T-cell (primary cell): ENCODE measurements at regions of chr5 and their contacts with region 1.

Region 1: DNA sequence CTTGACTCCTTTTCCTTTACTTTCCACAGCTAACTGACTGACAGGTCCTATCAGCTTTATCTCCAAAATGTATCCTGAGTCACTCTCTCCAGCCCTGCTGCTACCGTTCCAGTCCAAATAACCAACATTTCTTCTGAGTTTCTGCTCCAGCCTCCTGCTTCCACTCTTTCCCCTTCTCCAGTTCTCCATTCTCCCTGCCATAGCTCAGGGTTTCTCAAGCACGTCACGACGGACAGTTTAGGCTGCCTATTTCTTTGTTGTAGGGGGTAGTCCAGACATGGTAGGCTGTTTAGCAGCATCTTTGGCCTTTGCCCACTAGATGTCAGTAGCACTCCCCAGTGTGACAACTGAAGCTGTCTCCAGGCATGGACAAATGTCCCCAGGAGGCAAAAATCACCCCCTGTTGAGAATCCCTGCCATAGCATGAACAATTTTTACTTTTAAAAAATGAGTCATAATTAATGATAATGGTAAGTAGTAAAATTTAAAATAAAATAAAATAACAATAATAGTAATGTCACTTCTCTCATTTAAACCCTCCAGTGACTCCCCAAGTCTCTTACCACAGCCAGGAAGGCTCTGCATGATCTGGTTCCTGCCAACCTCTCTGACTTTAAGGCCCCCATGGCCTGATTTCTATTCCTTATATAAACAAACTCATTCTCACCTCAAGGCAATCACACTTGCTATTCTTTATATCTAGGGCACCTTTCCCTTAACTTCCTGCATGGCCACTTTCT is 105.4 kb upstream of the FER start:
- DNase-seq: peak in 33 of 35 experiments; percentile 8 to 68 (median 31)
- ATAC-seq: peak; percentile 53 to 70 (median 67)
- H3K4me3 ChIP-seq: no peak overlapping the region
- H3K4me3 Mint-ChIP-seq: no peak overlapping the region
- H3K27ac ChIP-seq: no peak overlapping the region
- H3K27ac Mint-ChIP-seq: no peak overlapping the region
- H3K4me1 ChIP-seq: no peaks in the 10 kb centered on the region
- H3K4me1 Mint-ChIP-seq: peaks cover 2 to 6% (median 4%) of the 10 kb centered on the region in 3 donors
- H3K27me3 ChIP-seq: peaks cover 0 to 1% of the 10 kb centered on the region in 2 experiments
- H3K27me3 Mint-ChIP-seq: peaks cover 0 to 15% of the 10 kb centered on the region in 2 donors

Region 2: DNA sequence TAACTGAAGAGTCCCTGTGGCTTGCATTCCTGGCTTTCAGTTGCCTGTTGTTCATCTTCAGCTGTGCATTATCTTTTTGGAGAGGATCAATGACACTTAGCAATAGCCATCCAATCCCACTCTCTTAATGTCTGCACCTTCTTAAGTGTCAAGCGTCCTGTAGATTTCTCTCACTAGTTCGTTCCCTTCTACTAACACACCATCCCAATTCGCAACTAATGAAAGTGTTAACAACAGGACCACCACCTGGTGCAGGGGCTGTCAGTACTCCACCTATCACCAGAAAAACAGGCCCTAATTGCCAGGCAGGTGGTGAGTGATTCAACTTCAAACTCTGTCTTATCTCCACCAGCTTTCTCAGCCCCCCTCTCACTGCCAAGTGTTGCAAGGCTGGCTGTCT is 802.2 kb before region 1 on chr5:
- CTCF ChIA-PET with region 1: no interaction called
- POLR2A ChIA-PET with region 1: no interaction called
- DNase-seq: no peak
- ATAC-seq: no peak
- H3K4me3 ChIP-seq: no peak overlapping the region
- H3K4me3 Mint-ChIP-seq: no peak overlapping the region
- H3K27ac ChIP-seq: no peak overlapping the region
- H3K27ac Mint-ChIP-seq: no peak overlapping the region
- H3K4me1 ChIP-seq: no peaks in the 10 kb centered on the region
- H3K4me1 Mint-ChIP-seq: no peaks in the 10 kb centered on the region
- H3K27me3 ChIP-seq: peaks cover 0 to 9% of the 10 kb centered on the region in 2 experiments
- H3K27me3 Mint-ChIP-seq: peaks cover 13 to 19% of the 10 kb centered on the region in 2 donors

Region 3: DNA sequence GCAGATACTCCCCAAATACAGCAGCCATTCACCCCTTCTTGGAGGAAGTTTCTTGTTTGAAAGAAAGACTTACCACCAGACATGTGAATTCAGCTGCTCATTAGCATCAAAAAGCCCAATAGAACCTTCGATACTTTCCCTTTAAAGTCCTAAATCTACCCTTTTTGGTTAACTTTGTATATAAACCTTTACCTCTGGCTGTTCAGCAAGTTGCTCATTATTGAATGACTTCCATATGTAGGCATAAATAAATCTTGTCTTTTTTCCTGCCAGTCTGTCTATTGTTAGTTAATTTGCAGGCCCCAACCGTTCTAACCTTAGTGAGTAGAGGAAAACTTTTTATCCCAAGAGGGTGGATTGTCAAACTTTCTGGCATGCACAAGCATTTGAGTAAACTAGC is 232.6 kb before region 1 on chr5:
- CTCF ChIA-PET with region 1: interaction called in 1 of 2 experiments, 11 read pairs
- POLR2A ChIA-PET with region 1: no interaction called
- DNase-seq: no peak
- ATAC-seq: no peak
- H3K4me3 ChIP-seq: no peak overlapping the region
- H3K4me3 Mint-ChIP-seq: no peak overlapping the region
- H3K27ac ChIP-seq: no peak overlapping the region
- H3K27ac Mint-ChIP-seq: no peak overlapping the region
- H3K4me1 ChIP-seq: no peaks in the 10 kb centered on the region
- H3K4me1 Mint-ChIP-seq: no peaks in the 10 kb centered on the region
- H3K27me3 ChIP-seq: no peaks in the 10 kb centered on the region
- H3K27me3 Mint-ChIP-seq: peaks cover 0 to 1% of the 10 kb centered on the region in 2 donors

Region 4: GRCh38 chr5:108560581-108560980 is 81.8 kb before region 1 on chr5:
- CTCF ChIA-PET with region 1: no interaction called
- POLR2A ChIA-PET with region 1: no interaction called
- DNase-seq: no peak
- ATAC-seq: no peak
- H3K4me3 ChIP-seq: no peak overlapping the region
- H3K4me3 Mint-ChIP-seq: no peak overlapping the region
- H3K27ac ChIP-seq: no peak overlapping the region
- H3K27ac Mint-ChIP-seq: no peak overlapping the region
- H3K4me1 ChIP-seq: no peaks in the 10 kb centered on the region
- H3K4me1 Mint-ChIP-seq: no peaks in the 10 kb centered on the region
- H3K27me3 ChIP-seq: no peaks in the 10 kb centered on the region
- H3K27me3 Mint-ChIP-seq: peaks cover 0 to 5% of the 10 kb centered on the region in 2 donors